WTC11 (cell line): ENCODE measurements at regions of chr18 and their contacts with region 1.

Region 1: DNA sequence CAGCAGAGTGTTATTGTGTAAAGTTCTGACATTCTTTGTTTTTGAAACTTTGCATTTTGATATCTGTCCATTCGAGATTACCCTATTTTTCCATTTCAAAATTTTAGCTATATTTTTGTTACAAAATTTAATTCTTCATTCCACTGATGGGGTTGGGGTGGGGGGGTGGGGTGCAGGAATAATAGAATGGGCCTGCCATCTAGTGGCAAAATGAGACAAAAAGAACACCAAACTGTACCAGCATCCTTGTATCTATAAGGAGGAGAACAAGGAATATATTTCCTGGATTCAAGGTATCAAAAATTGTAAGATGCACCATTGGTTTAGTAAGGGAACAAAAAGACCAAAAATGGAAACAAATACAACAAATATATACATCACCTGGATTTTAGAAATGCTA is 27.9 kb upstream of the TTR start:
- DNase-seq: no peak
- ATAC-seq: no peak
- H3K4me3 Mint-ChIP-seq: no peak overlapping the region
- H3K27ac Mint-ChIP-seq: no peak overlapping the region
- H3K4me1 Mint-ChIP-seq: peaks cover 12% of the 10 kb centered on the region; the same call in 1 of the 2 replicates
- H3K27me3 Mint-ChIP-seq: no peaks in the 10 kb centered on the region
- CTCF ChIP-seq: no peak

Region 2: GRCh38 chr18:31146809-31147208 is 417.0 kb before region 1 on chr18:
- CTCF ChIA-PET with region 1: no interaction called
- POLR2A ChIA-PET with region 1: no interaction called
- DNase-seq: no peak
- ATAC-seq: no peak
- H3K4me3 Mint-ChIP-seq: no peak overlapping the region
- H3K27ac Mint-ChIP-seq: no peak overlapping the region
- H3K4me1 Mint-ChIP-seq: no peaks in the 10 kb centered on the region
- H3K27me3 Mint-ChIP-seq: no peaks in the 10 kb centered on the region
- CTCF ChIP-seq: no peak

Region 3: GRCh38 chr18:31549416-31549815 is 14.4 kb before region 1 on chr18:
- CTCF ChIA-PET with region 1: interaction called, 11 read pairs
- POLR2A ChIA-PET with region 1: no interaction called
- DNase-seq: no peak
- ATAC-seq: peak; percentile 88
- H3K4me3 Mint-ChIP-seq: no peak overlapping the region
- H3K27ac Mint-ChIP-seq: peak overlapping the region; percentile 19
- H3K4me1 Mint-ChIP-seq: peaks cover 32% of the 10 kb centered on the region
- H3K27me3 Mint-ChIP-seq: no peaks in the 10 kb centered on the region
- CTCF ChIP-seq: no peak

Region 4: DNA sequence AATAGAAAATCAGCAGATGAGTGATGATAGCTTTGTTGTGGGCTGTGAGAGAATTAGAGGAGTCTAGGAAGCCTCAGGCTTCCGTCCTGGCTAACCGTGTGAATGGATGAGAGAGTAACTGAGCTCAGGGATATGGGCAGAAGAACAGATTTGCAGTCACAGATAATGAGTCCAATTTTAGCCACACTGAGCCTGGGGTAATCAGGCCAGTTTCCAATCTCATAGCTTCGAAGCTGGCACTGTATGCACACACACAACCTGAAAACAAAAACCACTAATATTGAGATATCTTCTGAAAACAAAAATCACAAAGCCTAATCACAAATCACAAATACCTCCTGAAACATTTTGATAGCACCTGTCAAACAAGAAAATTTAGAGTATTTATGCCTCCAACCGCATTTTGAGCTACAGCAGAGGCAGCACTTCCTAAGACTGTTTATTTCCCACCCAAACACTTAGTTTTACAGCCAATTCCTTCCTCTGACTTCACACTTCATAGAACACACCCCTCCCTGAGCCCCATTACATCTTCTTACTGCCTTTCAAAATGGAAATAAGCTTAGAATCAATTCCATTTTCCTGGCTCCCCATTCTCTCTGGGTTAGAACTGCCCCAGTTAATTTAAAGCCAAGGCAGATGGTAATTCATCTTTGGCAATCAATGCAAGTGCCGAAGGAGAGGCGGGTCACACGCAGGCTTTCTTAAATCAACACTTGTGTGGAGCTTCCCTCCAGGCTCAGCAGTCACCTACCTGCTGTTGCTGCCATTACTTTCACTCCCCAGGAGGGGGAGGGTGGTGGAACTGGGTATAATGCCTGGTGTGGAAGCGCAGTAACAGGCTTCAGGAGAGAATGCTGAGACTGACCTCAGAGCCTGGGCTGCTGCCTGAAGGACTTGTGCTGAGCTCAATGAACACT is 46.8 kb after region 1 on chr18:
- CTCF ChIA-PET with region 1: interaction called, 17 read pairs
- POLR2A ChIA-PET with region 1: no interaction called
- DNase-seq: peak; percentile 63
- ATAC-seq: peak; percentile 98
- H3K4me3 Mint-ChIP-seq: no peak overlapping the region
- H3K27ac Mint-ChIP-seq: no peak overlapping the region
- H3K4me1 Mint-ChIP-seq: peaks cover 31% of the 10 kb centered on the region
- H3K27me3 Mint-ChIP-seq: no peaks in the 10 kb centered on the region
- CTCF ChIP-seq: peak; percentile 46; the same call in 1 of the 2 replicates